Motor neuron (in vitro differentiated cells): ENCODE measurements at regions of chr11 and their contacts with region 1.

Region 1: DNA sequence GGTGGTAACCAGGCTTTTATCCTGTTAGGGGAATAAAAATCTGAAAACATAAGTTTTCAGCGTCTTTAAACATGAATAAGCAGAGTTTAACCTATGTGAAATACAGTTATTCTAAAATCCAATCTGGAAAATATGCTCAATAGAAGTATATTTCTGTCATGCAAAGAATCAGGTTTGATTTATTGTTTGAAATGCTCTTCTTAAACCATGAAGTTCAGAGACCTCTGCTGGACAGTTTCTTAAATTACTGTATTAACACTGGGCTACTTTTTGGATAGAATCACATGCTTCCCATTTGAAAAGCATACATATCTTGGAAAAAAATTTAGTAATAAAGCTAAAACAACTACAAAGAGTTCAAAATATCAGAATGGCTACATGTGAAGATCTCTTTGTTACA is 25.4 kb downstream of the APIP start:
- ATAC-seq: peak in 2 of 8 experiments; percentile 38 to 48
- H3K4me3 ChIP-seq: no peak overlapping the region
- H3K27ac ChIP-seq: no peak overlapping the region
- H3K4me1 ChIP-seq: no peaks in the 10 kb centered on the region

Region 2: GRCh38 chr11:34585735-34586487 is 304.9 kb before region 1 on chr11:
- in situ Hi-C with region 1: loop called in 4 of 9 experiments (anchors 10 to 25 kb)
- ATAC-seq: peak; percentile 65 to 92 (median 74)
- H3K4me3 ChIP-seq: peak overlapping the region in 2 of 5 donors; percentile 8 to 12
- H3K27ac ChIP-seq: no peak overlapping the region
- H3K4me1 ChIP-seq: no peaks in the 10 kb centered on the region

Region 3: GRCh38 chr11:35515224-35515623 is 624.4 kb after region 1 on chr11:
- in situ Hi-C with region 1: no loop called
- ATAC-seq: no peak
- H3K4me3 ChIP-seq: no peak overlapping the region
- H3K27ac ChIP-seq: no peak overlapping the region
- H3K4me1 ChIP-seq: peaks cover 18 to 25% of the 10 kb centered on the region in 2 donors